PC-9 (cell line): ENCODE measurements at regions of chr10 and their contacts with region 1.

Region 1: GRCh38 chr10:106214243-106214642 is 950.3 kb downstream of the SORCS1 start:
- DNase-seq: no peak
- H3K4me3 ChIP-seq: no peak overlapping the region
- H3K27ac ChIP-seq: no peak overlapping the region
- H3K4me1 ChIP-seq: no peaks in the 10 kb centered on the region
- H3K27me3 ChIP-seq: no peaks in the 10 kb centered on the region
- CTCF ChIP-seq: no peak

Region 2: GRCh38 chr10:104777086-104777799 is 1437.0 kb before region 1 on chr10:
- CTCF ChIA-PET with region 1: no interaction called
- POLR2A ChIA-PET with region 1: interaction called, 13 read pairs
- intact Hi-C with region 1: no loop called
- DNase-seq: no peak
- H3K4me3 ChIP-seq: no peak overlapping the region
- H3K27ac ChIP-seq: no peak overlapping the region
- H3K4me1 ChIP-seq: no peaks in the 10 kb centered on the region
- H3K27me3 ChIP-seq: no peaks in the 10 kb centered on the region
- CTCF ChIP-seq: no peak

Region 3: DNA sequence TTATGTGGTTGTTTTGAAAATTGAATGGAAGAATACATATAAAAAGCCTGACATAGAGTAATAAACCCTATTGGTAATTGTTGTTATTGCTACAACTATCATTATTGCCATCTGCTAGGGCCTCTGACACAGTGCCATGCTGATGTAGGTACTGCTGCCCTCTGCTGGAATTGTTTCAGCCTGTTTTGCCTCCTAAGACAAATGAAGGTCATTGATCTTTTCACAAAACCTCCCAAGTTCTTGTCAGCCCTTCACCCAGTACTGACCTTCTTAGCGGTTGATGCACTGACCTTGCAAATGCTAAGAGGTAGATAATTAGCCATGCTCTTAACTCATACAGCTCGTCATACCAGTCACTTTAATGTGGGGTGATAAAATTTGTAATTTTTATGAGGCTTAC is 25.0 kb before region 1 on chr10:
- CTCF ChIA-PET with region 1: no interaction called
- POLR2A ChIA-PET with region 1: no interaction called
- intact Hi-C with region 1: no loop called
- DNase-seq: peak in 1 of 2 experiments; percentile 1
- H3K4me3 ChIP-seq: no peak overlapping the region
- H3K27ac ChIP-seq: no peak overlapping the region
- H3K4me1 ChIP-seq: no peaks in the 10 kb centered on the region
- H3K27me3 ChIP-seq: no peaks in the 10 kb centered on the region
- CTCF ChIP-seq: peak; percentile 44